ENCODE measurements at regions of chr9 and their contacts with region 1.

Region 1: GRCh38 chr9:81689343-81690190 is at the start of gene TLE1:
- DNase-seq: peak; percentile 99
- total RNA-seq, gene TLE1: 9.8 TPM

Region 2: GRCh38 chr9:81389569-81389993 is 300.0 kb before region 1 on chr9:
- intact Hi-C with region 1: loop called (anchors 10 kb)
- DNase-seq: no peak

Region 3: GRCh38 chr9:81465468-81466011 is 224.0 kb before region 1 on chr9:
- intact Hi-C with region 1: loop called (anchors 5 kb)
- DNase-seq: no peak

Region 4: DNA sequence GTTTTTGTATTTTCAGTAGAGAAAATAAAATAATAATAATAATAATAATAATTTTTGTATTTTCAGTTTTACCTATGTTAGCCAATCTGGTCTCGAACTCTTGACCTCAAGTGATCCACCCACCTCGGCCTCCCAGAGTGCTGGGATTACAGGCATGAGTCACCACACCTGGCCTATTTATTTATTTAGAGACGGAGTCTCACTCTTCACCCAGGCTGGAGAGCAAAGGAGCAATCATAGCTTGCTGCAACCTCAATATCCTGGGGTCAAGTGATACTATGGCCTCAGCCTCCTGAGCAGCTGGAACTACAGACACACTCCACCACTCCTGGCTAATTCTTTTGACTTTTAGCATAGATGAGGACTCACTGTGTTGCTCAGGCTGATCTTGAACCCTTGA is 167.7 kb before region 1 on chr9:
- intact Hi-C with region 1: loop called (anchors 2 kb)
- DNase-seq: no peak

Region 5: DNA sequence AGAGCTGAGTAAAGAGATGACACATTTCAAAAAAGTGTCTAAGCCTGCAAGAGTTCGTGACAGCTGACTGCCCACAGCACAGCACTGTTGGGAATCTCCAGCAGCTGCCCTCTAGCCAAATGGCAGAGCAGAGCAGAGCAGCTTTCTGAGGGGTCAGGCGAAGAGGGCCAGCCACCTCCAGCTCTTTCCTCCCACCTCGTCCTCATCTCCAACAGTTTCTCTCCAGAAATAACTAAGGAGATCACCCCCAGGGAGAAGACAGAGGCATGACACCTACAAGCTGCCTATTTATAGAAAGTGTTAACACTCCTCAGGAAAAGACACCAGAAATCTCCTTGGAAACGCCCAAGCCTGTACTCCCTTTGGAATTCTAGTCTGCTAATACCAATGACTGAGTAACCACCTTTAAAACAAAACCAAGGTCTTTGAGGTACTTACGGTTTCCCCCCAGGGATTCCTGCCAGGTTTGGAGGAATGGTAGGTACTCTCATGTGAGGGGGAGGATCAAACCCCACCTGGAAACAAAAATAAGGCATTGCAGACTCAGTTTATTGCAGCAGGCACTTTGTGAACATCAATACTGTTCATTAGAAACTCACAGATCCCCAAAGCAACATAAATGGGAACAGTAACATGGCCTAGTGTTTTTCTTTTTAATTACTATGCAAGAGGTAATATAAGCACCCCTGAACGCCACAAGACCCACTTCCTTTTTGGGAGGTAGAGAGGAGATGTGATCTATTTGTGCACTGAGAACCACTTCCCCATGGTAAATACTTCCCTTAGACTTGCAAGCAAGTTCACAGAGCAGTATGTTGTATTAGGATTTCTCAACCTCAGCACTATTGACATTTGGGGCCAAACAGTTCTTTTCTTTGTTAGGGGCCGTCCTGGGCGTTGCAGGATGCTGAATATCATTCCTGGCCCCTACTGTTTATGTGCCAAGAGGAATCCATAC is 79.5 kb before region 1 on chr9:
- intact Hi-C with region 1: loop called (anchors 5 kb)
- DNase-seq: no peak

Region 6: GRCh38 chr9:81705578-81705977 is 16.0 kb after region 1 on chr9:
- intact Hi-C with region 1: no loop called
- DNase-seq: no peak

Region 7: DNA sequence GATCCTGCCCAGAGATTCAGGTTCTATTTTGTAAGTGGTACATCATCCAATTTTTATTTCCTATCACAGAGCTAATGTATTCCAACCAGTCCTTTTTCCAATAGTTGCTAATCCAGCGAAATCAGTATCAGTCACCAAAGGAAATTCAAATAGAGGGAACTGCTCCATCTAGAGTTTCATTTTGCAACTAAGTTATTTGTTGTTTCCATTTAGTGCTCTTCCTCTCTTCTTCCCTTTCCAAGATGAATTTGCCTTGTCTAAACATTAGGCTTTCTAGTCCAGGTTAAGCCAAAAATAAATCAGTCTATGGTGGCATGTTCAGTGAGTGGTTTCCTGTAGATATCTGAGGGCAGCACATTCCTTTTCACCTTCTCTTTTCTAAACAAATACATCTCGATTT is 158.9 kb after region 1 on chr9:
- intact Hi-C with region 1: loop called (anchors 5 kb)
- DNase-seq: no peak

Region 8: GRCh38 chr9:81874931-81875330 is 185.4 kb after region 1 on chr9:
- intact Hi-C with region 1: no loop called
- DNase-seq: no peak